Dorsolateral prefrontal cortex (tissue), 120 donors: ENCODE measurements at regions of chr17 and their contacts with region 1.

Region 1: DNA sequence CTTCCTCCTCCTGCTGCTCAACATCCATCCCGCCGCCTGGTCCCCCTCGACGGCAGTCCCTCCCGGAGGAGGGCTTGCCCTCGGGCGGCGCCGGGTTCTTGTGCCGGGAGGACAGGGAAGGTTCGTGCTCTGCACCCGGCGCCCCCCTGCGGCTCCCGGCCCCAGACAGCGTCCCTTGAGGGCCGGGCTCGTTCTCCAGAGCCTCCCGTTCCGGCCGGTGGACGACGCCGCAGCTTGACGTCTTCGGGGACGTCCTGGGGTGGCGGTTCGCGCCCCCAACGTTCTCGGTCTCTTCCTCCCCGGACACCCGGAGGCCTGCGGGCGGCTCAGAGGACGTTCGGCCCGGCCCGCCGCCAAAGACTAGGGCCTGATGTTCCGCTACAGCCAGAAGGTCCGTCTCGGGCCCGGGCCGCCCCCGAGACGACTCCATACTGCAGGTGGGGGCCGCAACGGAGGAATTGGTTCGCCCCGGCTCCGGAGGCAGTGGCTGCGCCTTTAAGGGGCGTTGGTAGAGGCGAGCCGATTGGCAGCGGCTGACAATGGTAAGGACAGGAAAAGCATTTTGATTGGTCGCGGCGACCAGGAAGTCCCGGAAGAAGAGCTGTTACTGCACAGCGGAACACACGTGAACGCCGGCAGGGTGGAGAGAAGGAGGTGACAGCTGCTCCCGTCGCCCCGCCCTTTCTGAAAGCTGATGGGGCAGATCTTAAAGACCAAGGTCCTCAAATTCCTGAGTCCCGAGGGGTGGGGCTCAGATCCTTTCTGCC is at the start of gene BORCS6:
- DNase-seq: peak; percentile 97 to 100 (median 99)
- H3K4me3 ChIP-seq: peak within 1 kb of the TSS; percentile 62 to 99 (median 91)
- H3K27ac ChIP-seq: peak within 1 kb of the TSS; percentile 90 to 100 (median 98)
- H3K27me3 ChIP-seq: no peaks in the 10 kb centered on the region
- CTCF ChIP-seq: peak in 26 of 56 donors; percentile 1 to 53 (median 23)
- total RNA-seq, gene BORCS6: 5.2 to 10.9 (median 8.0) TPM

Region 2: DNA sequence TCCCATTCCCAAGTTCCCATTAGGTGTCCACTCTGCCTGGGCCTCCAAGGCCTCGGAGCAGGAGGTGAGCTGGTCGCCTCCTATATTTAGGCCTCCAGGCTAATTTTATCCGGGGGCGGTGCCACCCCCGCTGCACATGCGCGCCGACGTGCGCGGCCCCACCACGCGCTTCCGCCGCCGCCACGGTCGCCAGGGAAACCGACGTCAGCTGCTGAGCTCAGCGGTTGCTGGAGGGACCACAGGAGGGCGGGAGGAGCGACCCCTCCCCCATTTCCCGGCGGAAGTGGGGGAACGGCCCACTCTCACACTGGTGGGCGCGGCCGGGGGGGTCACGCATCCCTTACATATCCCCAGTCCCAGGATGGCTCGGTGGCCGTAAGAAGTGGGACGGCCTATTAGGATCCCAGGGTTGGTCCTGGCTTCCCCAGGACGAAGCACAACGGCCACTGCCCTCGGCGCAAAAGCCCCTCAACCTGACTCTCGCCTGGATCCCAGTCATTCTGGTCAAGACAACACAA is 38.7 kb before region 1 on chr17:
- intact Hi-C with region 1: loop called (anchors 2 to 5 kb)
- DNase-seq: peak; percentile 63 to 92 (median 88)
- H3K4me3 ChIP-seq: peak overlapping the region; percentile 61 to 98 (median 88)
- H3K27ac ChIP-seq: peak overlapping the region; percentile 90 to 100 (median 100)
- H3K27me3 ChIP-seq: no peaks in the 10 kb centered on the region
- CTCF ChIP-seq: peak in 10 of 56 donors; percentile 9 to 26 (median 17)

Region 3: DNA sequence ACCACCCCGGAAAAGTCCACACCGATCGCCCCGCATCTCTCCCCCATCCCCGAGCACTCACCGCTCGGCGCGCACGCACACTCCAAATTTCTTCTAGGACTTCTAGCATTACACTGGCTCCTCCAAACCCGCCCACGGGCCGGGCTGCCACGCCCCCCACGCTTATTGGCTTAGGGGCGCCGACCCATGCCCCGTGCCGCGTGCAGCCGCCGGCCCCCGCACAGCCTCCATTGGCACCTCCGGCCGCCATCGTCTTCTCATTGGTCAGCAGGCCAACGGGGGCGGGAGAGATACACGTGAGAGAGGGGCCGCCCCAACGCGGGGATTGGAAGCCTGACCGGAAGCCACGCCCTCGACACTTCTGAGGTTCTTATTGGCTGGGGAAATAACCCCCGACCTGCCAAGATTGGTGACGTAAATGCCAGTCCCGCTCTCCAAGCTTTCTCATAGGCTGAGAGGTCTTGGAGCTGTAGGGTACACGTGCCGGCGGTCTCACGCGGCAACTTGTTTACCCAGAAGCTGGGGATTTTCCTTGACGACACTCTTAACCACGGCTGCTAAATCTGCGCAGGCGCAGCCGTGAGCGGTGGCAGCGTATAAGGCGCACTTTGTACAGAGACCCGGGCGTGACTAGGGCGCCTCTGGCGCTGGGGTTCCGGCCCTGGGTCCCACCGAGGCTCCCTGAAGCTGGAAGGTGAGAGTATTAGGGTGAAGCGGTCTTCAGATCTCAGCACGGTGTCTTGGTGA is 33.5 kb before region 1 on chr17:
- intact Hi-C with region 1: loop called (anchors 2 to 5 kb)
- DNase-seq: peak; percentile 98 to 100 (median 99)
- H3K4me3 ChIP-seq: peak overlapping the region; percentile 60 to 98 (median 87)
- H3K27ac ChIP-seq: peak overlapping the region; percentile 90 to 100 (median 100)
- H3K27me3 ChIP-seq: no peaks in the 10 kb centered on the region
- CTCF ChIP-seq: peak in 36 of 56 donors; percentile 9 to 56 (median 32)

Region 4: GRCh38 chr17:8222630-8223356 is 32.9 kb after region 1 on chr17:
- intact Hi-C with region 1: loop called (anchors 1 kb)
- DNase-seq: peak; percentile 93 to 97 (median 94)
- H3K4me3 ChIP-seq: peak overlapping the region; percentile 52 to 99 (median 80)
- H3K27ac ChIP-seq: peak overlapping the region; percentile 95 to 100 (median 99)
- H3K27me3 ChIP-seq: no peaks in the 10 kb centered on the region
- CTCF ChIP-seq: peak in 11 of 56 donors; percentile 10 to 57 (median 32)

Region 5: GRCh38 chr17:8248751-8249607 is 59.1 kb after region 1 on chr17 and contains the start of gene PFAS:
- intact Hi-C with region 1: loop called in 1 of 2 experiments (anchors 2 kb)
- DNase-seq: peak; percentile 91 to 96 (median 95)
- H3K4me3 ChIP-seq: peak within 1 kb of the TSS; percentile 66 to 99 (median 87)
- H3K27ac ChIP-seq: peak within 1 kb of the TSS; percentile 87 to 100 (median 97)
- H3K27me3 ChIP-seq: no peaks in the 10 kb centered on the region
- CTCF ChIP-seq: peak in 28 of 56 donors; percentile 1 to 56 (median 23)
- total RNA-seq, gene PFAS: 20.3 to 49.9 (median 35.2) TPM